Activated T-helper 1 cell treated with anti-CD3 and anti-CD28 coated beads, Interleukin-12 subunit alpha, Interleukin-12 subunit beta, Interleukin-2, Interleukin-4 antibody, amounts not matched to agents 30 ng/mL and 10 ng/mL and 1 ng/mL, durations not matched to agents 14 hours and 24 hours and 36 hours (primary cell): ENCODE measurements at regions of chr7 and their contacts with region 1.

Region 1: DNA sequence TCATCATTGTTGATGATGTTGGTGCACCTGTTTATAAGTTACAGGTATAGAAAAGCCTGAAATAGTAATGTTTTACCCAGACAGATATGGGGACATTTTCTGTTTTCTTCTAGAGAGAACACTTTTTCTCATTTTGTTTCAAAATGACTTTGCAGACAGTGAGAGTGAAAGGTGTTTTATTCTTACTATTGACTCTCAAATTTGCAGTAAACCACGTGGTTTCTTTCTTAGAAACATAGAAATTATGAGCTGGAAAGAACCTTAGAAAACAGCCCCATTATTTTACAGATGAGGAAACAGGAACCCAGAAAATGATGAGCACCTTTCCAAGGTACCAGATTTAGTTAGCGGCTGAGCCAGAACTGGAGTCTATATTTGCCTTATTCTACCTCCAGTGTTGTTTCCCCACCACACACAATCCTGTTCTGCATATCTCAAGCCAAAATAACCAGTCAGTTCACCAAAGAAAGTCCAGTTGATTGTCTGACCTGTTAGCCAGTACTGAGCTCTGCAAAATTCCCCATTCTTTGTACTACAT is 138.9 kb upstream of the AHR start:
- DNase-seq: no peak
- H3K4me3 Mint-ChIP-seq: no peak overlapping the region
- H3K27ac Mint-ChIP-seq: peak overlapping the region; percentile 55
- H3K4me1 Mint-ChIP-seq: peaks cover 30% of the 10 kb centered on the region
- H3K27me3 Mint-ChIP-seq: peaks cover 10% of the 10 kb centered on the region

Region 2: DNA sequence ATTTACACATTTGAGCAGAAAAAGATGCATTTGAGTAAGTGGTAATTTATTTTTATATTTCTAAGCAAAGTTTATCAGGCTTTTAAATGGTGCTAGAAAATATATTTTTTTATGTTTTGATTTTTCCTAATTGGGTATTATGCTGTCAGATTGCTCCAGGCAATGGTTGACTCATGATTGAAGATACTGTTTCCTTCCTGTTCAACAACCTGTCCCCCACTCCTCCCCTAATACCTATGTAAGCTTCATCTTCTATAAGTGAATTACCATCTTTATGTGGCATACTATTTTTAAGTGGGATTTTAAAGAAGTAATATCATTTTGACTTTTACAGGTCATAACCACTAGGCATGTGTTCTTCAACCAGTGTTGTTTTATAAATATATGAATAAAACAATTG is 384.6 kb before region 1 on chr7:
- intact Hi-C with region 1: no loop called
- DNase-seq: no peak
- H3K4me3 Mint-ChIP-seq: no peak overlapping the region
- H3K27ac Mint-ChIP-seq: no peak overlapping the region
- H3K4me1 Mint-ChIP-seq: no peaks in the 10 kb centered on the region
- H3K27me3 Mint-ChIP-seq: no peaks in the 10 kb centered on the region

Region 3: GRCh38 chr7:16982640-16983350 is 176.8 kb before region 1 on chr7:
- intact Hi-C with region 1: loop called (anchors 2 kb)
- DNase-seq: no peak
- H3K4me3 Mint-ChIP-seq: no peak overlapping the region
- H3K27ac Mint-ChIP-seq: no peak overlapping the region
- H3K4me1 Mint-ChIP-seq: peaks cover 7% of the 10 kb centered on the region
- H3K27me3 Mint-ChIP-seq: peaks cover 18% of the 10 kb centered on the region

Region 4: GRCh38 chr7:17041324-17041723 is 118.2 kb before region 1 on chr7:
- intact Hi-C with region 1: loop called (anchors 2 kb)
- DNase-seq: no peak
- H3K4me3 Mint-ChIP-seq: no peak overlapping the region
- H3K27ac Mint-ChIP-seq: no peak overlapping the region
- H3K4me1 Mint-ChIP-seq: peaks cover 20% of the 10 kb centered on the region
- H3K27me3 Mint-ChIP-seq: peaks cover 6% of the 10 kb centered on the region

Region 5: DNA sequence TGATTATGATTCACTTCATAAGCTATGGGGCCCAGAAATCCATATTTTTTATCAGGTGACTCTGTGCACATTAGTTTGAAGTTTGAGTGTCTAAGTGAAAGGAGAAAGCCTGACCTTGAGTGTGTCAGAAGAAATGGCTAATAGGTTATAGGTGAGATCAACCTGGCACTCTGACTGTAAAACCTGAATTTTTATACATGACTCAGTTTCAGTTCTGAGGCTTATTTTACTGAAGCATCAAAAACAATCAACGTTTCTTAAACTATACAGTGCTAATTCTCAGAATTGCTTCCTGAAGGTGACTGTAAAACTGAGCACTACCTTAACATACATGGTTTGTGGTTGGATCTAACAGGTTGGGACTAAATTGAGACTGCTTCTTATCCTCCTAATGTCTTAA is 20.5 kb before region 1 on chr7:
- intact Hi-C with region 1: loop called (anchors 1 kb)
- DNase-seq: no peak
- H3K4me3 Mint-ChIP-seq: no peak overlapping the region
- H3K27ac Mint-ChIP-seq: peak overlapping the region; percentile 81
- H3K4me1 Mint-ChIP-seq: peaks cover 66% of the 10 kb centered on the region
- H3K27me3 Mint-ChIP-seq: no peaks in the 10 kb centered on the region

Region 6: DNA sequence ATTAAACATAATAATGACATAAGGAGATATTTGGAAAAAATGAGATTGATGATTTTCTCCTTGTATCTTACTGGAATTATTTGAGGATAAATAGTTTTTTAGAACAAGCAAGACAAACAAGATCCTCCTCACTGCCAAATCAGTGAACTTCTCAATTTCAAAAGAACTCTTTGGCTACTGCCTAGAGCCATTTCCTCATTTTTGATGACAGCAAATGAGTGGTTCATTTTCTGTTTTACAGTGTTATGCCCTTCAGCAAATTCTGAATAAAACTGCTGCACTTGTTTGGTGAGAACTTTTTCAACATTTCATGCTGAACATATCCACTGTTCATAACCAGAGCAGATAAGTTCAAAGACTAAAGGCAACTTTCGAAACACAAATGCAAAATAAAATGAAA is 96.4 kb after region 1 on chr7:
- intact Hi-C with region 1: loop called (anchors 1 kb)
- DNase-seq: no peak
- H3K4me3 Mint-ChIP-seq: no peak overlapping the region
- H3K27ac Mint-ChIP-seq: no peak overlapping the region
- H3K4me1 Mint-ChIP-seq: peaks cover 12% of the 10 kb centered on the region
- H3K27me3 Mint-ChIP-seq: no peaks in the 10 kb centered on the region